SK-N-SH (cell line): ENCODE measurements at regions of chr19 and their contacts with region 1.

Region 1: GRCh38 chr19:14048443-14049153 is 13.3 kb downstream of the PALM3 start:
- DNase-seq: peak; percentile 83
- H3K4me3 ChIP-seq: no peak overlapping the region
- H3K27ac ChIP-seq: no peak overlapping the region
- H3K4me1 ChIP-seq: no peaks in the 10 kb centered on the region
- H3K27me3 ChIP-seq: no peaks in the 10 kb centered on the region
- CTCF ChIP-seq: peak; percentile 79
- EP300 ChIP-seq: no peak
- RAD21 ChIP-seq: peak; percentile 52

Region 2: DNA sequence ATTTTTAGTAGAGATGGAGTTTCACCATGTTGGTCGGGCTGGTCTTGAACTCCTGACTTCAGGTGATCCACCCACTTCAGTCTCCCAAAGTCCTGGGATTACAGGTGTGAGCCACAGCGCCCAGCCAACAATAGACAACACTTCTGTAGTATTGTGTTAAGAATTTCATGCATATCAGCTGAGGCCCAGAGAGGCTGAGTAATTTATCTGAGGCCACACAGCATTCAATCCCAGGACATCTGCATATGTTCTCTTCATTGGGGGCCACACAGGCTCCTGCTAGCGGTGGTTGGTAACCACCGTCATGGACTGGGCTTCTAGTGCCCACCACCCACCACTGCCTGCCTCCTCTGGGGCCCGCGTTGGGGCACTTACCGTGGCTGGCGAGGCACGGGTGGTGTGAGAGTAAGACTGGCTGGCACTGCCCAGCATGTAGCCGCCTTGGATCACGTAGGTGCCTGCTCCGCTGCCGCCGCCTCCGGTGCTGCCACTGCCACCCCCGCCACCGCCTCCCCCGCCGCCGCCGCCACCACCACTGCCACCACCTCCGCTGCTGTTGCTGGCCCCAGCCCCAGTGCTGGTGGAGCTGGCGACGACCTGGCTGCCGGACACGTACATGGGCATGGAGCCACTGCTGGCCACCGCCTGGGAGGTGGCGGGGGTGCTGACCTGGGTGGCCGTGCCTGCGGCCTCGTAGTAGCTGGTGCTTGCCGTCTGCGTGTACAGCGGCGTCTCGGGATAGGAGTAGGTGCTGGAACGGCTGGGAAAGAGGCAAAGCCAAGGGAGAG is 76.0 kb before region 1 on chr19:
- CTCF ChIA-PET with region 1: interaction called, 12 read pairs
- POLR2A ChIA-PET with region 1: no interaction called
- DNase-seq: no peak
- H3K4me3 ChIP-seq: no peak overlapping the region
- H3K27ac ChIP-seq: no peak overlapping the region
- H3K4me1 ChIP-seq: no peaks in the 10 kb centered on the region
- H3K27me3 ChIP-seq: no peaks in the 10 kb centered on the region
- CTCF ChIP-seq: no peak
- EP300 ChIP-seq: no peak
- RAD21 ChIP-seq: no peak

Region 3: DNA sequence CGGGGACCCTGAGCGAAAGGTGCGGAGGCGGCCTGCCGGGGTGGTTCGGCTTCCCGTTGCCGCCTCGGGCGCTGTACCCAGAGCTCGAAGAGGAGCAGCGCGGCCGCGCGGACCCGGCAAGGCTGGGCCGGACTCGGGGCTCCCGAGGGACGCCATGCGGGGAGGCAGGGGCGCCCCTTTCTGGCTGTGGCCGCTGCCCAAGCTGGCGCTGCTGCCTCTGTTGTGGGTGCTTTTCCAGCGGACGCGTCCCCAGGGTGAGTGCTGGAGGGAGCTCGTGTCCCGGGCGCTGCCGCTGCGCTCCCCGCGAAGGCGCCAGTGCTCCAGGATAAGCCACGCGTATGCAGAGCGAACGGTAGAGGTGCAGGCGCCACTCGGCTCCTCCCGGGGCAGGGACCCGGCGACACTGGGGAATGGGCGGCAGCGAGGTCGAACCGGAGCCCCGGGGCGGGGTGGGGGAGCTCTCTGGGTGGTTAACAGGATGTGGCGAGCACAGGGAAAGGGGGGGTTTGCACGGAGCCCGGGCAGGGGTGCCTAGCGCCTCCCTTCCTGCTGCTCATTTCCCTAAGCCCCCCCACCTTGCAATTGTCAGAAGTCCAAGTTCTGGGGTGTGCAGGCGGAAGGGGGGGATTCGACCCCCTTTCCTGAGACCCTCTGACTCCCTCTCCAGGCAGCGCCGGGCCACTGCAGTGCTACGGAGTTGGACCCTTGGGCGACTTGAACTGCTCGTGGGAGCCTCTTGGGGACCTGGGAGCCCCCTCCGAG is 16.7 kb before region 1 on chr19 and contains the start of gene IL27RA:
- CTCF ChIA-PET with region 1: interaction called, 36 read pairs
- POLR2A ChIA-PET with region 1: interaction called, 3 read pairs
- DNase-seq: peak; percentile 87
- H3K4me3 ChIP-seq: peak within 1 kb of the TSS; percentile 60 to 80
- H3K27ac ChIP-seq: peak within 1 kb of the TSS in 1 of 2 experiments; percentile 40; a peak in 3 of 4 replicates
- H3K4me1 ChIP-seq: peaks cover 0 to 3% of the 10 kb centered on the region in 2 experiments; a peak in 1 of 4 replicates
- H3K27me3 ChIP-seq: no peaks in the 10 kb centered on the region
- CTCF ChIP-seq: peak; percentile 70
- EP300 ChIP-seq: no peak
- RAD21 ChIP-seq: peak; percentile 61
- polyA plus RNA-seq, gene IL27RA: 9.3 TPM in 2 replicates